ENCODE measurements at regions of chr16 and their contacts with region 1.

Region 1: GRCh38 chr16:2752035-2752849 is at the start of gene SRRM2:
- DNase-seq: peak; percentile 99
- H3K4me3 Mint-ChIP-seq: peak within 1 kb of the TSS; percentile 90
- H3K27ac Mint-ChIP-seq: peak within 1 kb of the TSS; percentile 99
- H3K4me1 Mint-ChIP-seq: peaks cover 53% of the 10 kb centered on the region
- H3K27me3 Mint-ChIP-seq: no peaks in the 10 kb centered on the region
- total RNA-seq, gene SRRM2: 635 and 680 TPM in 2 replicates

Region 2: DNA sequence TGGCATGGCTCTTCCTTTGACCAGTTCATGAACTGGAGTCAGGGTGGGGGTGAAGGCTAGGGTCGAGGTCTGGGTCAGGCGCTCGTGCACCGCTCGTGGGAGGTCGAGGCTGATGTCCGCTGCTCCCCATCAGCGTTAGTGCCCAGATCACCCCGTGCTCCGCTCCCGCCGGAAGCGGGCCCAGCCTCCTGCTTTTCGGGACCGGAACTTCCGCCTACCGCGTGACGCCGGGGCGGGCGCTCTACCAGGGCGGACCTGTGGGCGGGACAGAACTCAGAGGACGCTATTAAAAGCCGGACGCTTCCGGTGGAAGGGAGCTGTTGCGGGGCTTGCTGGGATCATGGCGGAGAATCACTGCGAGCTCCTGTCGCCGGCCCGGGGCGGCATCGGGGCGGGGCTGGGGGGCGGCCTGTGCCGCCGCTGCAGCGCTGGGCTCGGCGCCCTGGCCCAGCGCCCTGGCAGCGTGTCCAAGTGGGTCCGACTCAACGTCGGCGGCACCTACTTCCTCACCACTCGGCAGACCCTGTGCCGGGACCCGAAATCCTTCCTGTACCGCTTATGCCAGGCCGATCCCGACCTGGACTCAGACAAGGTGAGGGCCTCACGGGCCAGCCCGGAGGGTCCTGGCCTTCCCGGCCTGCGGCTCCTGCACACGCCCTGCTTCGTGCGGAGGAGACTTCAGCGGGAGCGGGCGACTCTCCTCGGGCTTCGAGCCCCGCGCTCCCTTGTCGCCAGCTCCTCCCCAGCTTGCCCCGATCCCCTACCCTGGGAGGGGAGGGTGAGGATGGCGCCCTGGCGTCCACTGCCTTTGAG is 69.8 kb before region 1 on chr16 and contains the start of gene KCTD5:
- intact Hi-C with region 1: loop called (anchors 1 kb)
- DNase-seq: peak; percentile 99
- H3K4me3 Mint-ChIP-seq: peak within 1 kb of the TSS; percentile 100
- H3K27ac Mint-ChIP-seq: peak within 1 kb of the TSS; percentile 89
- H3K4me1 Mint-ChIP-seq: peaks cover 22% of the 10 kb centered on the region
- H3K27me3 Mint-ChIP-seq: no peaks in the 10 kb centered on the region
- total RNA-seq, gene KCTD5: 54.4 and 57.0 TPM in 2 replicates

Region 3: DNA sequence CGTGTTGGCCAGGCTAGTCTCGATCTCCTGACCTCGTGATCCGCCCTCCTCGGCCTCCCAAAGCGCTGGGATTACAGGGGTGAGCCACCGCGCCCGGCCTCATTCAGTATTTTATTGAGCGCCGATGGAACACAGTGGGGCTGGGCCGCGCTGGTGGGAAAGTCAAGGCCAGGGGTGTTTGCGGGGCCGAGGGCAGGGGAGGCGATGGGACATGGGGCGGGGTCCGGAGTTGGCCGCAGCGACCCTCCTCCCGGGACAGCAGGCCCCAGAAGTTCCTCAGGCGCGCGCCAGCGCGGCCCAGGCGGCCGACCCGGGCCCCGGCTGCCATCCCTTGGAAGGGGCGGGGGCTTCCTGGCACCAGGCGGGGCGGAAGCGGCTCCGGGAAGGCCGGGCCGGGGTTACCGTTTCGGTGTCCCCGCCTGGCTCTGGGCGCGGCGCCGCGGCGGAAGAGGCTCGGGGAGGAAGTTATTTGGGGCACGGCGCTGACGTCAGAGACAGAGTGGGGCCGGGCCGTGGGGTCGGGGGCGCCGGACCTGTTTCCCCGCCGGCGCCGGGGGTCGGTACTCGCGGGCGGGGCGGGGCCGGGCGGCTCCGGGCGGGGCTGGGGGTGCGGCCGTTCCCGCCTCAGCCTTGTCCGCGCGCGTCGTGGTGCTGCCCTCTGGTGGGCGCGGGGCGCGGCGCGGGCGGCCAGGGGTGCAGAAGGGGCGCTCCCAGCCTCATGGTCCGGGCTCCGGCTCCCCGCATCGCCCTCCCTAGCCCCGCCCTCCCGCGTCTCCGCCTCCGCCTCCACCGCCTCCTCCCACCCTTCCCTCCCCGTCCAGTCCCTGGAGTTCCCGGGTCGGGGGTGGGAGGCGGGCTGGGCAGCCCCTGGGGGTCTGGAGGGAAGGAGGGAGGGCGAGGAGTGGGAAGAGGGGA is 31.3 kb before region 1 on chr16:
- intact Hi-C with region 1: loop called (anchors 1 kb)
- DNase-seq: peak; percentile 97
- H3K4me3 Mint-ChIP-seq: peak overlapping the region; percentile 86
- H3K27ac Mint-ChIP-seq: peak overlapping the region; percentile 89
- H3K4me1 Mint-ChIP-seq: peaks cover 2% of the 10 kb centered on the region
- H3K27me3 Mint-ChIP-seq: peaks cover 8% of the 10 kb centered on the region

Region 4: DNA sequence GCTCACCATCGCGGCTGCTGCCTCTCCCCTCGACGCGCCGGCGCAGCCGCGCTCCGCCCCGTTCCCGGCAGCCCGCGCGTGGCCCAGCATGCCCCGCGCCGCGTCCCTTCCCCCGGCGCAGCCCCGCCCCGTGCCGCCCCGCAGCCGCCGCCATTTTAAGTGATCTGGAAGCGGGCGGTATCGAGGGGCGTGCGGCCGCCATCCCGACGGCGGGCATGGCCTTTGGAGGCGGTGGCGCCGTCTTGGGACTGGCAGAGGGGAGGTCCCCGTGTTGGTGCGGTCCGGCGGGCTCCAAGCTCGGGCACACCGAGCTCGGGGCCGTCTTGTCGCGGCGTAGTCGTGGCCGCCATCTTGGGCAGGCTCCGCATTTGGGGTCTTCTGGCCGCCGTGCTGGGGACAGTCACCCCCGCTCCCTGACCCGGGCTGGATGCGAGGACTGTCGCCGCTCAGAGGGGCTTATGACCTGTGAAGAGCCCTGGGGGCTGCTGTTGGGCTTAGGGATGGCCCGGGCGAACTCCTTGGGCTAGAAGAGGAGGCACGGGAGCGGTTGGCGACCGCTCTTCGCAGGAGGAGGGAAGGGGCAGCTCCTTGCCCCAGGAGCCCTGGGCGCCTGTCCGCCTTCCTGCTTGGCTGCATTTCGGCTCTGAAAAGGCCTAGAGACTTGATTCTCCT is 25.1 kb after region 1 on chr16 and contains the start of gene ELOB:
- intact Hi-C with region 1: loop called (anchors 1 kb)
- DNase-seq: peak; percentile 97
- H3K4me3 Mint-ChIP-seq: peak within 1 kb of the TSS; percentile 92
- H3K27ac Mint-ChIP-seq: peak within 1 kb of the TSS; percentile 95
- H3K4me1 Mint-ChIP-seq: peaks cover 25% of the 10 kb centered on the region
- H3K27me3 Mint-ChIP-seq: no peaks in the 10 kb centered on the region
- total RNA-seq, gene ELOB: 241 and 259 TPM in 2 replicates